CD4-positive, alpha-beta T cell (primary cell): ENCODE measurements at regions of chr1 and their contacts with region 1.

Region 1: GRCh38 chr1:113444857-113445256 is 54.5 kb downstream of the MAGI3 start:
- DNase-seq: no peak
- ATAC-seq: no peak
- H3K4me3 ChIP-seq: no peak overlapping the region
- H3K4me3 Mint-ChIP-seq: no peak overlapping the region
- H3K27ac ChIP-seq: no peak overlapping the region
- H3K27ac Mint-ChIP-seq: no peak overlapping the region
- H3K4me1 ChIP-seq: no peaks in the 10 kb centered on the region
- H3K4me1 Mint-ChIP-seq: no peaks in the 10 kb centered on the region
- H3K27me3 ChIP-seq: no peaks in the 10 kb centered on the region
- H3K27me3 Mint-ChIP-seq: no peaks in the 10 kb centered on the region
- CTCF ChIP-seq: no peak

Region 2: GRCh38 chr1:113118266-113118665 is 326.6 kb before region 1 on chr1:
- CTCF ChIA-PET with region 1: no interaction called
- POLR2A ChIA-PET with region 1: no interaction called
- intact Hi-C with region 1: no loop called
- DNase-seq: no peak
- ATAC-seq: no peak
- H3K4me3 ChIP-seq: no peak overlapping the region
- H3K4me3 Mint-ChIP-seq: no peak overlapping the region
- H3K27ac ChIP-seq: no peak overlapping the region
- H3K27ac Mint-ChIP-seq: no peak overlapping the region
- H3K4me1 ChIP-seq: no peaks in the 10 kb centered on the region
- H3K4me1 Mint-ChIP-seq: no peaks in the 10 kb centered on the region
- H3K27me3 ChIP-seq: no peaks in the 10 kb centered on the region
- H3K27me3 Mint-ChIP-seq: no peaks in the 10 kb centered on the region
- CTCF ChIP-seq: no peak

Region 3: DNA sequence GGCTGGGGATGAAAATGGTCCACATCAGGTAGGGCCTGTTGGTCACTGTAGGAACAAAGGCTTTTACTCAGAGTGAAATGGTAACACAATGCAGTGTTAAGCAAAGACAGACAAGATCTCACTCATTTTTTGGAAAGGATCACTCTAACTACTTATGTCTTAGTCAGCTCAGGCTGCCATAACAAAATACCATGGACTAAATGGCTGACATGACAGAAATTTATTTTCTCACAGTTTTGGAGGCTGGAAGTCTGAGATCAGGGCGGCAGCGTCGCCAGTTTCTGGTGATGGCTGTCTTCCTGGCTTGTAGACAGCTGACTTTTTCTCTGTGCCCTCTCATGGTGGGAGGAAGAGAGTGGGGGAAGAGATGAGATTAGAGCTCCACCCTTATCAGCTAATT is 64.8 kb before region 1 on chr1:
- CTCF ChIA-PET with region 1: no interaction called
- POLR2A ChIA-PET with region 1: no interaction called
- intact Hi-C with region 1: loop called in 1 of 2 experiments (anchors 5 kb)
- DNase-seq: no peak
- ATAC-seq: no peak
- H3K4me3 ChIP-seq: no peak overlapping the region
- H3K4me3 Mint-ChIP-seq: no peak overlapping the region
- H3K27ac ChIP-seq: no peak overlapping the region
- H3K27ac Mint-ChIP-seq: no peak overlapping the region
- H3K4me1 ChIP-seq: no peaks in the 10 kb centered on the region
- H3K4me1 Mint-ChIP-seq: no peaks in the 10 kb centered on the region
- H3K27me3 ChIP-seq: peaks cover 0 to under 1% of the 10 kb centered on the region in 2 experiments
- H3K27me3 Mint-ChIP-seq: peaks cover 14% of the 10 kb centered on the region
- CTCF ChIP-seq: no peak